Activated CD4-positive, alpha-beta memory T cell treated with anti-CD3 and anti-CD28 coated beads for 36 hours (primary cell): ENCODE measurements at regions of chr16 and their contacts with region 1.

Region 1: DNA sequence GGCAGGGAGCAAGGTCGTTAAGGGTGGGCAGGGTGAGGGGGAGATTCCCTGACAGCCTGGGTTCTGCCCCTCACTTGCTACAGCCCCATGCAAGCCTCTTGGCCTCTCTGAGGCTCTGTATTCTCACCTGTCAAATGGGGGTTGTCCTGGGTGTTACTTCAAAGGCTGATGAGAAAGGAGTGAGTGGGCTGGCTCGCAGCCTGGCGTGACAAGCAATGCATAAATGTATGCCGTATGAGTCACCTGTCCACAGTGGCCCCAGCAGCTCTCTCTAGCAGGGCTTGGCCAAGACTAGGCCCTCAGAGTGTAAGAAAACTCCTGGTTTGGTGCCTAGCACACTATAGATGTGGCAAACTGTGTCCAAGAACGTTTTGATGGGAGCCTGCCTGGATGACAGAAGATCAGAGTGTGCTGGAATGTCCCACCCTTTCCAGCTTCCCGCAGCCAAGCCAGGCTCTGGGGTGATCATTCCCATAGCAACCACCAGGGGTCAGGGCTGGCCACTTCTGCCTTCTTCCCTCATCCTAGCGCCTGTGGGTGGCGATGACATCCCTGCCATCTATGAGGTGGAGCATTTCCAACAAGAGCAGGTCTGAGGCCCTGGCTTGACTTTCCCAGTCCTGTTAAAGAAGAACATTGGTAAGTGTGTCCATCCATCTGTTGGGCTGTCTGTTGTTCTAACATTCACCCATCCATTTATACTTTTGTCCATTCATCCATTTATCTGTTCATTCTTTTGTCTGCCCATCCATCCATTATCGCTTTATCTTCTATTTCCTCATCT is 37.2 kb upstream of the ADGRG1 start:
- DNase-seq: peak; percentile 87
- H3K4me3 Mint-ChIP-seq: peak overlapping the region; percentile 53
- H3K27ac Mint-ChIP-seq: peak overlapping the region; percentile 93
- H3K4me1 Mint-ChIP-seq: peaks cover 34% of the 10 kb centered on the region
- H3K27me3 Mint-ChIP-seq: no peaks in the 10 kb centered on the region

Region 2: DNA sequence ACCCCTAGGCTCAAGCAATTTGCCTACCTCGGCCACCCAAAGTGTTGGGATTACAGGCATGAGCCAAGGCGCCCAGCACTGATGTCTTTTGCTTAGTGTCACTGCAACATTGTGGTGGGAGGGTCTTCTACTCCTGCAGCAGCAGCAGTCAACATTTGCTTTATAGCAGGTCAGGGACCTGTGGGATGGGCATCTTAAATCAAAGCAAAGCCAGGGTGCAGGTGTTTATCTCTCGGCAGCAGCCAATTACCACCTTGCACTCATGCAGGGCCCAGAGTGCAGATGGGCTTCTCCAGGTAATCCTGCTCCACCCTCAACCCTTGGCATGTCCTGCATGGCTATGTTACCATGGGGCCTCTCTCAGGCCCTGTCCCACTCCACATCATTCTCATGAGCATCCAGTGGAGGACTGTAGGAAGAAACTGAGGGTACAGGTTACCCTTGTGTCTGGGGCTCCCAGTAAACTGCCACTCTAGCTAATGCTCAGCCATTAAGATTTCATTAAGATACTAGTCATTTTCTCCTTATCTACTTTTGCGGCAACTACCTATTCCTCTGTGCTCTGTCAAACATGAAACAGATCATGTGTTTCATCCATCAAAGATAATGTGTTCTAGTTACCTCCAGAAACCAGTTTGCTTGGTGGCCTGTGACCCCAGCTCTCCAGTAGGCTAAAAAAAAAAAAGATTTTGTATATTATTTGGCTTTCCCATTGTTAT is 32.0 kb before region 1 on chr16:
- CTCF ChIA-PET with region 1: no interaction called
- POLR2A ChIA-PET with region 1: no interaction called
- intact Hi-C with region 1: no loop called
- DNase-seq: no peak
- H3K4me3 Mint-ChIP-seq: no peak overlapping the region
- H3K27ac Mint-ChIP-seq: no peak overlapping the region
- H3K4me1 Mint-ChIP-seq: peaks cover 8% of the 10 kb centered on the region
- H3K27me3 Mint-ChIP-seq: no peaks in the 10 kb centered on the region

Region 3: GRCh38 chr16:57609541-57610401 is 18.5 kb after region 1 on chr16:
- CTCF ChIA-PET with region 1: interaction called, 64 read pairs
- POLR2A ChIA-PET with region 1: interaction called, 12 read pairs
- intact Hi-C with region 1: loop called (anchors 1 kb)
- DNase-seq: peak; percentile 92
- H3K4me3 Mint-ChIP-seq: peak overlapping the region; percentile 48
- H3K27ac Mint-ChIP-seq: peak overlapping the region; percentile 94
- H3K4me1 Mint-ChIP-seq: peaks cover 51% of the 10 kb centered on the region
- H3K27me3 Mint-ChIP-seq: no peaks in the 10 kb centered on the region

Region 4: GRCh38 chr16:57628008-57628781 is 36.9 kb after region 1 on chr16 and contains the start of gene ADGRG1:
- CTCF ChIA-PET with region 1: interaction called, 4 read pairs
- POLR2A ChIA-PET with region 1: no interaction called
- intact Hi-C with region 1: loop called (anchors 5 kb)
- DNase-seq: peak; percentile 81
- H3K4me3 Mint-ChIP-seq: peak within 1 kb of the TSS; percentile 14
- H3K27ac Mint-ChIP-seq: no peak within 1 kb of the TSS
- H3K4me1 Mint-ChIP-seq: peaks cover 11% of the 10 kb centered on the region
- H3K27me3 Mint-ChIP-seq: peaks cover 25% of the 10 kb centered on the region
- total RNA-seq, gene ADGRG1: 4.7 to 6.0 TPM

Region 5: GRCh38 chr16:57639172-57639887 is 48.1 kb after region 1 on chr16:
- CTCF ChIA-PET with region 1: interaction called, 15 read pairs
- POLR2A ChIA-PET with region 1: no interaction called
- intact Hi-C with region 1: no loop called
- DNase-seq: peak; percentile 14
- H3K4me3 Mint-ChIP-seq: no peak overlapping the region
- H3K27ac Mint-ChIP-seq: no peak overlapping the region
- H3K4me1 Mint-ChIP-seq: no peaks in the 10 kb centered on the region
- H3K27me3 Mint-ChIP-seq: peaks cover 18% of the 10 kb centered on the region

Region 6: GRCh38 chr16:57720142-57720575 is 128.9 kb after region 1 on chr16:
- CTCF ChIA-PET with region 1: no interaction called
- POLR2A ChIA-PET with region 1: no interaction called
- intact Hi-C with region 1: loop called (anchors 1 kb)
- DNase-seq: peak; percentile 68
- H3K4me3 Mint-ChIP-seq: no peak overlapping the region
- H3K27ac Mint-ChIP-seq: no peak overlapping the region
- H3K4me1 Mint-ChIP-seq: no peaks in the 10 kb centered on the region
- H3K27me3 Mint-ChIP-seq: peaks cover 6% of the 10 kb centered on the region

Region 7: DNA sequence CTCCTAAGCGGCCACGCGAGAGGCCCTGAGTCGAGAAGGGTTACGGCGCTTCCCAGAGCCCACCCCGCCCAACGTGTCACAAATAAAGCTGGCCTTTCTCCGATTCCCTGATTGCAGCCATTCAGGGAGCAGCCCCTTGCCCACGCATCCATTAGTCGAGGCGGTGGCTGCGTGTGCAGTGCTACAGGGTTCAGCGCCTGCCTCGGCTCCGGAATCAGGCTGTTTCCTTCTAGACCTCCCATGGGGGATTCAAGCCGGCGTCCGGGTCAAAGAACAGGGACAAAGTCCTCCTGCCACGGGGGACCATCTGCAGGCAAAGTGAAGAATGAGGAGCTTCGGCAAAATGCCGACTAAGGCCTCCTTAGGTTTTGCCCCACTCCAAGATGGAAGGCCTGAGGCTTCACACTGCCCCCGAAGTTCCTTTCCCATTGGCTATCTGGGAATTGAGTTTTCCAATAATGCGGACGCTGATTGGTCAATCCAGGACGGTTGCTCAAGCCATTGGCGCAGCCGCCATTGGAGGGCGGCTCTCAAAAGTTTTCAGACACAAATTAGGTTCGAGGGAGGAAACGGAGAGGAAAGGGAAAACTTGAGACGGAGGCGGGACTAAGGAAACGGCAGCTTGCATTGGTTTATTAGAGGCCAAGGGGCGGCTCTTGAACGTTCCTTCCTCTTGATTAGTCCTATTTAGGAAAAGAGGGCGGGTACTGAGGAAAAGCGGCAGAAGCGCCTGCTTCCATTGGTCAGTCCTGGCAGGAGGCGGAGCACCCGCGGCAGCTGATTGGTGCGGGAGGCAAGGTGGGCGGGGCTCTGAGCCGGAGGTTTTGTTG is 143.9 kb after region 1 on chr16:
- CTCF ChIA-PET with region 1: interaction called, 21 read pairs
- POLR2A ChIA-PET with region 1: interaction called, 4 read pairs
- intact Hi-C with region 1: loop called (anchors 1 kb)
- DNase-seq: peak; percentile 98
- H3K4me3 Mint-ChIP-seq: peak overlapping the region; percentile 99
- H3K27ac Mint-ChIP-seq: peak overlapping the region; percentile 87
- H3K4me1 Mint-ChIP-seq: peaks cover 27% of the 10 kb centered on the region
- H3K27me3 Mint-ChIP-seq: peaks cover 2% of the 10 kb centered on the region

Region 8: GRCh38 chr16:57988929-57989328 is 397.7 kb after region 1 on chr16:
- CTCF ChIA-PET with region 1: no interaction called
- POLR2A ChIA-PET with region 1: no interaction called
- intact Hi-C with region 1: no loop called
- DNase-seq: no peak
- H3K4me3 Mint-ChIP-seq: no peak overlapping the region
- H3K27ac Mint-ChIP-seq: no peak overlapping the region
- H3K4me1 Mint-ChIP-seq: peaks cover 8% of the 10 kb centered on the region
- H3K27me3 Mint-ChIP-seq: no peaks in the 10 kb centered on the region